CD8-positive, alpha-beta T cell (primary cell): ENCODE measurements at regions of chr12 and their contacts with region 1.

Region 1: DNA sequence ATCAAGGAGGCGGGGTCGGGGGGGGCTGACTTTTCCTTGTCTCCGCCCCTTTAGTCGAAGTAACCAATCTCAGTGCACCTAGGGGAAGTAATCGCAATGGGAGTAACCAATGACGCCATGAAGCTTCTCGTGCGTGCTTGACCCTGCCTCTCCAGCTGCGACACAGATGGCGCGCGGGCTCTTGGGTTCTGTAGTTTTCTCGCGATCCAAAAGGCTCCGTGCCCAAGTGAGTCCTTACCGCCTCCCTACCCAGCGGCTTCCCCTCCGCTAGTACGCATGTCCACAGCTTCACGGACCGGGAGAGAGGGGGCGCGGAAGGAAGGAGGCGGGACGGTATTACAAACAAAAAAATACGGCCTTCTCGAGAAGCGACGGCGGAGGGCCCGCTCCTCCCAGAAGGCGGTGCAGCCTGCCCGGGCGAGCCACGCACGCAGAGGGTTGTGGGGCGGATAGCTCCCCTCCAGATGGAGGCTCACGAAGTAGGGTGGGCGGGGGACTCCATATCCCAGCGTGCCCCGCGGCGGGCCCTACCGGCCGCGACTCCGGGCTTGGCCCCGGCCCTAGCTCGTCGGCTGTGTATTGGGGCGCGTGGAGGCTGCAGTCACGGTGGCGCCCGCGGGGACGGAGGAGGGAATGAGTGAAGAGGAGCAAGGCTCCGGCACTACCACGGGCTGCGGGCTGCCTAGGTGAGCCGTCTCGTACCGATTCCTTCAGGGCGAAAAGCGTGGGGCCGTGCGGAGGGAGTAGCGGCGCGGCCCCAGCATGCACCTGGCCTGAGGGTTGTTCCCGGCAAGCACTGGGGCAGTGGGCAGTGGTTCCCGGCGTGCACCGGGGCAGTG is at the start of gene TARBP2:
- DNase-seq: peak; percentile 92 to 99 (median 98)
- ATAC-seq: peak; percentile 77
- H3K4me3 ChIP-seq: peak within 1 kb of the TSS; percentile 64 to 87
- H3K4me3 Mint-ChIP-seq: peak within 1 kb of the TSS; percentile 93
- H3K27ac ChIP-seq: peak within 1 kb of the TSS; percentile 90 to 95
- H3K27ac Mint-ChIP-seq: peak within 1 kb of the TSS; percentile 97
- H3K4me1 ChIP-seq: peaks cover 28% of the 10 kb centered on the region
- H3K4me1 Mint-ChIP-seq: peaks cover 48% of the 10 kb centered on the region
- H3K27me3 ChIP-seq: no peaks in the 10 kb centered on the region
- H3K27me3 Mint-ChIP-seq: no peaks in the 10 kb centered on the region
- CTCF ChIP-seq: no peak
- total RNA-seq, gene TARBP2: 22.9 to 23.9 TPM

Region 2: GRCh38 chr12:53047221-53048042 is 453.6 kb before region 1 on chr12:
- CTCF ChIA-PET with region 1: no interaction called
- POLR2A ChIA-PET with region 1: interaction called, 3 read pairs
- intact Hi-C with region 1: loop called in 1 of 2 experiments (anchors 10 kb)
- DNase-seq: peak; percentile 45 to 85 (median 65)
- ATAC-seq: peak; percentile 85
- H3K4me3 ChIP-seq: peak overlapping the region; percentile 8 to 85
- H3K4me3 Mint-ChIP-seq: peak overlapping the region; percentile 69
- H3K27ac ChIP-seq: peak overlapping the region in 1 of 2 experiments; percentile 70
- H3K27ac Mint-ChIP-seq: peak overlapping the region; percentile 55
- H3K4me1 ChIP-seq: peaks cover 5% of the 10 kb centered on the region
- H3K4me1 Mint-ChIP-seq: peaks cover 11% of the 10 kb centered on the region
- H3K27me3 ChIP-seq: no peaks in the 10 kb centered on the region
- H3K27me3 Mint-ChIP-seq: no peaks in the 10 kb centered on the region
- CTCF ChIP-seq: no peak

Region 3: DNA sequence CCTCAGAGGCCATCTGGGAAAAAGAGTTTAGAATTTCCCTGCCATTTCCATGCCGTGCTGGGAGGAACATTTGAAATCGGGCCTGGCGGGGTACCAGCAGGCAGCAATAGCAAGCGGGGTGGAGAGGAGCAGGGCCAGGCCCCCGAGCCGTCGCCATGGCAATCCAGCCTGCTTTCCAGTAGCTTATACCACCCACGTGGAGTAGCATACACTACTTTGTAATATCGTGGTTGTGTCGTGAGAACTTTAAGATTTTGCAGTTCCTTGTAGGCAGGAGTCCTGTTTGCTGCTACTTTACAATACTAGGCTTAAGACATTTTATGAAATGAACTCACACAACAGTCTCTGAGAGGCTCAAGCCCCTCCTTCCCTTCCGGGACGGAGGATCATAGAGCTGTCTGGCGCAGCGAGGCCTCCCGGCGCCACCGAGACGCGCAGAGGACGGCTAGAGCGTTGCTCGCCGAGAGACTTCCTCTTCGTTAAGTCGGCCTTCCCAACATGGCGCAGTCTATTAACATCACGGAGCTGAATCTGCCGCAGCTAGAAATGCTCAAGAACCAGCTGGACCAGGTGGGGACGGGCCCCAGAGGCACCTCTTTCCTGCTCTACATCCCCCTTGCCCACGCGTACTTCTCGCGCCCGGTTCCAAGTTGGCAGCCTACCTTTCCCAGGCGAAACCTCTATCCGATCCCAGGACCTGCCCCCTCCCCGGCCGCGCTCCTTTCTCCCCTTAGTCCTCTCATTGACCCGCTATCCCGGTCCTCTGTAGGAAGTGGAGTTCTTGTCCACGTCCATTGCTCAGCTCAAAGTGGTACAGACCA is 205.7 kb before region 1 on chr12 and contains the start of gene PFDN5:
- CTCF ChIA-PET with region 1: no interaction called
- POLR2A ChIA-PET with region 1: interaction called, 5 read pairs
- intact Hi-C with region 1: loop called in 1 of 2 experiments (anchors 2 kb)
- DNase-seq: peak; percentile 72 to 95 (median 87)
- ATAC-seq: peak; percentile 92
- H3K4me3 ChIP-seq: peak within 1 kb of the TSS; percentile 75 to 88
- H3K4me3 Mint-ChIP-seq: peak within 1 kb of the TSS; percentile 99
- H3K27ac ChIP-seq: peak within 1 kb of the TSS; percentile 80 to 82
- H3K27ac Mint-ChIP-seq: peak within 1 kb of the TSS; percentile 99
- H3K4me1 ChIP-seq: peaks cover 28% of the 10 kb centered on the region
- H3K4me1 Mint-ChIP-seq: peaks cover 51% of the 10 kb centered on the region
- H3K27me3 ChIP-seq: no peaks in the 10 kb centered on the region
- H3K27me3 Mint-ChIP-seq: no peaks in the 10 kb centered on the region
- CTCF ChIP-seq: no peak
- total RNA-seq, gene PFDN5: 741 to 751 TPM

Region 4: DNA sequence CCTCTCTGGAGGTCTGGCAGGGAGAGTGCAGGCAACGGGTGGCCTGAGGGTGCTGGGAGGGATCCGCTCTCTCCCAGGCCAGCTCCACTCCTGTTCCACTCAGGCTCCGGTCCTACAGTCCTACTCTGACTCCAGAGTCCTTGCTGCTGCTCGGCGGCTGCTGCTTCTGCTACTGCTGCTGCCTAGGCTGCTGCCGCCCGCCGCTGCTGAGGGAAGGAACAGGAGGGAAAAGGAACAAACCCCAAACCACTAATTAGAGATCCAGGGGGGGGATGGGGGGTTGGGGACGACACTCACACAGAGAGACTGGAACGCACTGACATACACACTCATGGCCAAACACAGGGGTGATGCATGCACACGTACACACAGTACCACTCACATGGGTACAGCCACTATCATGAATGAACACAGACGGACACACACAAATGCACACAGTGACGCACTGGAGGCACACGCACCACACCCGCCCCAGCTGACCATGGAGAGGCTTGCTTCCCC is 164.8 kb before region 1 on chr12 and contains the start of gene SP7:
- CTCF ChIA-PET with region 1: no interaction called
- POLR2A ChIA-PET with region 1: no interaction called
- intact Hi-C with region 1: no loop called
- DNase-seq: no peak
- ATAC-seq: no peak
- H3K4me3 ChIP-seq: no peak within 1 kb of the TSS
- H3K4me3 Mint-ChIP-seq: no peak within 1 kb of the TSS
- H3K27ac ChIP-seq: no peak within 1 kb of the TSS
- H3K27ac Mint-ChIP-seq: no peak within 1 kb of the TSS
- H3K4me1 ChIP-seq: peaks cover 11% of the 10 kb centered on the region
- H3K4me1 Mint-ChIP-seq: peaks cover 8% of the 10 kb centered on the region
- H3K27me3 ChIP-seq: peaks cover 30 to 34% of the 10 kb centered on the region in 2 experiments
- H3K27me3 Mint-ChIP-seq: peaks cover 29% of the 10 kb centered on the region
- CTCF ChIP-seq: no peak
- total RNA-seq, gene SP7: not detected

Region 5: DNA sequence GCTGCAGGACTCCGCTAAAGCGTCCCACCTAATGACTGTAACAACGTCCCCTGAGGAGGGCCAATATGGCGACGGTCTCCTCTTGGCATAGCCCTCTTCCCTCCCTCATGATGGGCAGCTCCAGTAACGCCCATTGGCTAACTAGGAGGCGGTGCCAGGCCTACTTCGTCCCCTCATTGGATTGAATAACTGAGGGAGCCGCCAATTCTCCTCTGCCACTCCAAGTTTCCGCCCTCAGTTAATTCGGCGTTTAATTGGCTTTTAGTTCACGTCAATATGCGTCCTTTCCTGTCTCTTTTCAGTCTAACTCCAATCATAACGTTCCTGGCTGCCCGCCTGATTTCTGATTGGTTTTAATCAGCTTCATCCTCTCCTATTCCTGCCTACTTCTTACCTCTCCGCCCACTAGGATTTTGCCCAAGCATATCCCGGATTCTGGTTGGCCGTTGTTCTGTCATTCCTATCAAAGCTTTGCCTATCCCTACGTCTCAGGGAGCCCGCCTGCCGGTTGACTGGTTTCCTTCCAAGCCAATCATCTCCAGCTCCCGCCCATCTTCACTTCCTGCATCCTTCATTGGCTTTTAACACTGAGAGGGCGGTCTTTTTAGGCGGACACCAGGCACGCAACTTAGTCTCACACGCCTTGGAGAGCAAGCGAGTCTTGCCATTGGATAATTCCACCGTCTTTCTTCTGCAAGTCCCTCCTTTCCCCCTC is 121.4 kb before region 1 on chr12:
- CTCF ChIA-PET with region 1: interaction called, 4 read pairs
- POLR2A ChIA-PET with region 1: interaction called, 25 read pairs
- intact Hi-C with region 1: loop called (anchors 1 to 2 kb)
- DNase-seq: peak in 8 of 9 experiments; percentile 79 to 100 (median 92)
- ATAC-seq: peak; percentile 73
- H3K4me3 ChIP-seq: peak overlapping the region; percentile 64 to 65
- H3K4me3 Mint-ChIP-seq: no peak overlapping the region
- H3K27ac ChIP-seq: peak overlapping the region; percentile 61 to 83
- H3K27ac Mint-ChIP-seq: no peak overlapping the region
- H3K4me1 ChIP-seq: peaks cover 44% of the 10 kb centered on the region
- H3K4me1 Mint-ChIP-seq: peaks cover 35% of the 10 kb centered on the region
- H3K27me3 ChIP-seq: no peaks in the 10 kb centered on the region
- H3K27me3 Mint-ChIP-seq: no peaks in the 10 kb centered on the region
- CTCF ChIP-seq: no peak

Region 6: GRCh38 chr12:53451661-53452158 is 49.3 kb before region 1 on chr12 and contains the start of gene PCBP2:
- CTCF ChIA-PET with region 1: interaction called, 4 read pairs
- POLR2A ChIA-PET with region 1: interaction called, 10 read pairs
- intact Hi-C with region 1: loop called (anchors 1 kb)
- DNase-seq: peak; percentile 94 to 99 (median 98)
- ATAC-seq: peak; percentile 93
- H3K4me3 ChIP-seq: peak within 1 kb of the TSS; percentile 81 to 88
- H3K4me3 Mint-ChIP-seq: peak within 1 kb of the TSS; percentile 99
- H3K27ac ChIP-seq: peak within 1 kb of the TSS; percentile 80 to 95
- H3K27ac Mint-ChIP-seq: peak within 1 kb of the TSS; percentile 99
- H3K4me1 ChIP-seq: peaks cover 27% of the 10 kb centered on the region
- H3K4me1 Mint-ChIP-seq: peaks cover 43% of the 10 kb centered on the region
- H3K27me3 ChIP-seq: no peaks in the 10 kb centered on the region
- H3K27me3 Mint-ChIP-seq: no peaks in the 10 kb centered on the region
- CTCF ChIP-seq: peak; percentile 94
- total RNA-seq, gene PCBP2: 1,250 to 1,255 TPM

Region 7: DNA sequence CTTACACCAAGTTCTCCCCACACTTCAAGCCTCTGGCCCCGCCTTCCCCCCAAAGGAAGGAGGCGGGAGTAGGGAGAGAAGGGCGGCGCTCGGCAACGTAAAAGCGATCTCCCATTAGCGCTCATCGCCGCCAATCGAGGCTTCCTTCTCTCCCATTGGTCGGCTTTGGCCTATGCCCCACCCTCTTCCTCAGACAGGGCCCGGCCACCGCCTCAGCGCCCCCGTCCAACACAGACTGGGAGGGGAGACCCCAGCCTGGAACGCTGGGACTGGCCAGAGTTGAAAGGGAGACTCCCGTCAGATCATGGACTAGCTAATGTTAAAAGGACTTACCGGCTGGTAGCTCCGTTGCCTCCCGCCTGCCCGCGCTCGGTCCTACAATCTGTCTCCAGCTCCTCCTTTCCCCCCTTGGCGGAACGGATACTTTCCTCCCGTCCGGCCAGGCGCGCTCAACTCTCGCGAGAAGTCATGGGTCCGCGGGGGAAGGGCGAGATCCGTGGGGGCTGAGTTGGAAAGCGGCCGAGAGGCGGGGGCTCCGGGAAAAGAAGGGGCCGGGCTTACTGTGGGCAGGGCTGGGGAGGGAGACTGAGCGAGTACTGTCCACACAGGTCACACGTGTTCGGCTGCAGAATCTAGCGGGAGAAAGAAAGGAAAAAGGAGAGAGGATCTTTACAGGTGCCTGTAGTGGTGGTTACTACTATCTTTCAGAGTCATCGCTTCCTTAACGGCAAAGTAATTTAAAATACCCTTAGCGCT is 125.1 kb after region 1 on chr12 and contains the start of gene ATF7:
- CTCF ChIA-PET with region 1: no interaction called
- POLR2A ChIA-PET with region 1: interaction called, 5 read pairs
- intact Hi-C with region 1: loop called in 1 of 2 experiments (anchors 1 kb)
- DNase-seq: peak; percentile 96 to 100 (median 98)
- ATAC-seq: peak; percentile 92
- H3K4me3 ChIP-seq: peak within 1 kb of the TSS; percentile 65 to 90
- H3K4me3 Mint-ChIP-seq: peak within 1 kb of the TSS; percentile 93
- H3K27ac ChIP-seq: peak within 1 kb of the TSS; percentile 84 to 85
- H3K27ac Mint-ChIP-seq: peak within 1 kb of the TSS; percentile 98
- H3K4me1 ChIP-seq: peaks cover 30% of the 10 kb centered on the region
- H3K4me1 Mint-ChIP-seq: peaks cover 46% of the 10 kb centered on the region
- H3K27me3 ChIP-seq: no peaks in the 10 kb centered on the region
- H3K27me3 Mint-ChIP-seq: no peaks in the 10 kb centered on the region
- CTCF ChIP-seq: no peak
- total RNA-seq, gene ATF7: 9.1 to 13.2 TPM

Region 8: GRCh38 chr12:54191550-54192022 is 690.6 kb after region 1 on chr12:
- CTCF ChIA-PET with region 1: no interaction called
- POLR2A ChIA-PET with region 1: no interaction called
- intact Hi-C with region 1: loop called in 1 of 2 experiments (anchors 2 kb)
- DNase-seq: peak; percentile 61 to 92 (median 78)
- ATAC-seq: peak; percentile 74
- H3K4me3 ChIP-seq: no peak overlapping the region
- H3K4me3 Mint-ChIP-seq: no peak overlapping the region
- H3K27ac ChIP-seq: no peak overlapping the region
- H3K27ac Mint-ChIP-seq: no peak overlapping the region
- H3K4me1 ChIP-seq: peaks cover 9% of the 10 kb centered on the region
- H3K4me1 Mint-ChIP-seq: peaks cover 24% of the 10 kb centered on the region
- H3K27me3 ChIP-seq: peaks cover 6 to 15% of the 10 kb centered on the region in 2 experiments
- H3K27me3 Mint-ChIP-seq: peaks cover 39% of the 10 kb centered on the region
- CTCF ChIP-seq: peak; percentile 68